OCI-LY7 (cell line): ENCODE measurements at regions of chr19 and their contacts with region 1.

Region 1: GRCh38 chr19:40598121-40598917 is 2.9 kb upstream of the LTBP4 start:
- DNase-seq: peak; percentile 80
- H3K4me3 ChIP-seq: peak overlapping the region; percentile 62
- H3K27ac ChIP-seq: no peak overlapping the region
- H3K4me1 ChIP-seq: peaks cover 57% of the 10 kb centered on the region
- CTCF ChIP-seq: peak; percentile 98

Region 2: GRCh38 chr19:40139533-40140287 is 458.6 kb before region 1 on chr19:
- CTCF ChIA-PET with region 1: no interaction called
- POLR2A ChIA-PET with region 1: no interaction called
- intact Hi-C with region 1: loop called (anchors 1 kb)
- DNase-seq: peak; percentile 70
- H3K4me3 ChIP-seq: no peak overlapping the region
- H3K27ac ChIP-seq: no peak overlapping the region
- H3K4me1 ChIP-seq: peaks cover 26% of the 10 kb centered on the region
- CTCF ChIP-seq: peak; percentile 93

Region 3: GRCh38 chr19:40358773-40359172 is 239.5 kb before region 1 on chr19:
- CTCF ChIA-PET with region 1: no interaction called
- POLR2A ChIA-PET with region 1: no interaction called
- intact Hi-C with region 1: no loop called
- DNase-seq: peak; percentile 81
- H3K4me3 ChIP-seq: peak overlapping the region; percentile 31
- H3K27ac ChIP-seq: peak overlapping the region; percentile 44
- H3K4me1 ChIP-seq: peaks cover 45% of the 10 kb centered on the region
- CTCF ChIP-seq: no peak

Region 4: DNA sequence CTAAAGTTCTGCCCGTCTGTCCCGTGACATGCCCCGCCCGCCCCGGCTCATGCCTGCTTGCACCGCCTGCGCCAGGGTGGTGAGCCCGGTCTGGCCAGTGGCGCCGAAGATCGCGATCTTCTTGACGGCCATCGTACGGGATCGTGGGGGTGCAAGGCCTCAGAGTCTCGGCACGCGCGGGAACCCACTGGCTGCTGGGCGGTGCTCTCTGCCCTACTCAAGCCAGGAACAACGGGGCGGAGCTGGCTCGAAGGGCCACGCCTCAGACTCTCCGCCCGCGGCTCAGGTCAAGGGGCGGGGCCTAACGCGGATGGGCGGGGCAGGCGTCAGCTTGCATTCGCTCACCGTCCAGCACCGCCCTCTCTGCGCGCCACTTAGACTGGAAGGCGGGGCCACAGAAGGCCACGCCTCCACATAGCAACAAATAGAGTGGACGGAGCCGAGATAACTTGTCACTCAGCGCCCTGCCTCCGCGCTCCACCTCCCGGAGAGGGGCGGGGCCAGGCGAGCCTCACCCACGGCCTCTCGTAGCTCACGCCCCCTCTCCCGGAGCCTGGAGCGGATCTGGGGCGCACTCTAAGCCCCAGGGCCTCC is 132.7 kb before region 1 on chr19 and contains the start of gene BLVRB:
- CTCF ChIA-PET with region 1: no interaction called
- POLR2A ChIA-PET with region 1: no interaction called
- intact Hi-C with region 1: loop called (anchors 2 kb)
- DNase-seq: peak; percentile 99
- H3K4me3 ChIP-seq: peak within 1 kb of the TSS; percentile 78
- H3K27ac ChIP-seq: peak within 1 kb of the TSS; percentile 29
- H3K4me1 ChIP-seq: peaks cover 43% of the 10 kb centered on the region
- CTCF ChIP-seq: no peak
- total RNA-seq, gene BLVRB: 46.0 and 48.5 TPM in 2 replicates

Region 5: GRCh38 chr19:40523322-40524047 is 74.8 kb before region 1 on chr19:
- CTCF ChIA-PET with region 1: no interaction called
- POLR2A ChIA-PET with region 1: no interaction called
- intact Hi-C with region 1: loop called (anchors 1 kb)
- DNase-seq: peak; percentile 84
- H3K4me3 ChIP-seq: no peak overlapping the region
- H3K27ac ChIP-seq: no peak overlapping the region
- H3K4me1 ChIP-seq: peaks cover 10% of the 10 kb centered on the region
- CTCF ChIP-seq: peak; percentile 87

Region 6: GRCh38 chr19:40542202-40542859 is 56.0 kb before region 1 on chr19:
- CTCF ChIA-PET with region 1: no interaction called
- POLR2A ChIA-PET with region 1: no interaction called
- intact Hi-C with region 1: loop called (anchors 1 kb)
- DNase-seq: no peak
- H3K4me3 ChIP-seq: no peak overlapping the region
- H3K27ac ChIP-seq: no peak overlapping the region
- H3K4me1 ChIP-seq: no peaks in the 10 kb centered on the region
- CTCF ChIP-seq: no peak

Region 7: DNA sequence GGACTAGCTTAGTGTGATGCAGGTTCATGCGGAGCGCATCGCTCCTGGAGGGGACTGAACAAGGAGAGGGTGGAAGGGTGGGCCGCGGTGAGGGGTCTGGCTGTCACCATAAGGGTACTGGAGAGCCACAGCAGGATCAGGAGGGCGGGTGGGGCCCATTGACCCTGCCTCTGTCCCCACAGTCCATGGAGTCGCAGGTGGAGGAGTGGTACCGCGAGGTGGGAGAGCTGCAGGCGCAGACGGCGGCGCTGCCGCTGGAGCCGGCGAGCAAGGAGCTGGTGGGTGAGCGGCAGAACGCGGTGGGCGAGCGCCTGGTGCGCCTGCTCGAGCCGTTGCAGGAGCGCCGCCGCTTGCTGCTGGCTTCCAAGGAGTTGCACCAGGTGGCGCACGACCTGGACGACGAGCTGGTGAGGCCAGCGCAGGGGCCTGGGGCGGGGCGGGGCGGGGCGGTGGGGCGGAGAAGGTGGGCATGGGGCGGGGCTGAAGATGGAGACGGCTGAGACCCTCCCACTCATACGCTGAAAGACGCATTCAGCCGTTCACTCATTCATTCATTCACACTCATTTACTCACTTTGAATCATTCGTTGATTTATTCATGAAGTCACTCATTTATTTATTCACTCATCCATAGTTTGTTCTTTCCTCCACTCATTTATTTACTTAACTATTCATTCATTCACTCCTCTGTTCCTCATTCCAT is 49.2 kb before region 1 on chr19:
- CTCF ChIA-PET with region 1: no interaction called
- POLR2A ChIA-PET with region 1: interaction called, 4 read pairs
- intact Hi-C with region 1: loop called (anchors 1 kb)
- DNase-seq: peak; percentile 59
- H3K4me3 ChIP-seq: no peak overlapping the region
- H3K27ac ChIP-seq: no peak overlapping the region
- H3K4me1 ChIP-seq: no peaks in the 10 kb centered on the region
- CTCF ChIP-seq: peak; percentile 65